Motor neuron (in vitro differentiated cells): ENCODE measurements at regions of chr3 and their contacts with region 1.

Region 1: DNA sequence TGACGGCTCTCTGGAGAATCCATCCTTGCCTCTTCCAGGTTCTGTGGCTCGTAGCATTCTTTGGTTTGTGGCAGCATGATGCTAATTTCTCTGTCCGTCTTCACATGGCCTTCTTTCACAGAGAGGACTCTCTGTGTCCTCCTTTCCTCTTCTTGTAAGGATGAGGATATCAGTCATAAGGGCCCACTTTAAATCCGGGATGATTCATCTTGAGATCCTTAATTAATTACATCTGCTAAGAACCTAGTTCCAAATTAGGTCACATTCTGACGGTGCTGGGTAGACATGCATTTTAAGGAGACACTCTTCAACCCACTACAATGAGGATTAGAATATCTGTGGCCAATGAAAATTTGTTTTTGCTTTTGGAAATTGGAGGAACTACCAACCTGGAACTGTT is 15.7 kb upstream of the GXYLT2 start:
- ATAC-seq: peak in 2 of 8 experiments; percentile 31 to 71
- H3K4me3 ChIP-seq: no peak overlapping the region
- H3K27ac ChIP-seq: no peak overlapping the region
- H3K4me1 ChIP-seq: no peaks in the 10 kb centered on the region

Region 2: DNA sequence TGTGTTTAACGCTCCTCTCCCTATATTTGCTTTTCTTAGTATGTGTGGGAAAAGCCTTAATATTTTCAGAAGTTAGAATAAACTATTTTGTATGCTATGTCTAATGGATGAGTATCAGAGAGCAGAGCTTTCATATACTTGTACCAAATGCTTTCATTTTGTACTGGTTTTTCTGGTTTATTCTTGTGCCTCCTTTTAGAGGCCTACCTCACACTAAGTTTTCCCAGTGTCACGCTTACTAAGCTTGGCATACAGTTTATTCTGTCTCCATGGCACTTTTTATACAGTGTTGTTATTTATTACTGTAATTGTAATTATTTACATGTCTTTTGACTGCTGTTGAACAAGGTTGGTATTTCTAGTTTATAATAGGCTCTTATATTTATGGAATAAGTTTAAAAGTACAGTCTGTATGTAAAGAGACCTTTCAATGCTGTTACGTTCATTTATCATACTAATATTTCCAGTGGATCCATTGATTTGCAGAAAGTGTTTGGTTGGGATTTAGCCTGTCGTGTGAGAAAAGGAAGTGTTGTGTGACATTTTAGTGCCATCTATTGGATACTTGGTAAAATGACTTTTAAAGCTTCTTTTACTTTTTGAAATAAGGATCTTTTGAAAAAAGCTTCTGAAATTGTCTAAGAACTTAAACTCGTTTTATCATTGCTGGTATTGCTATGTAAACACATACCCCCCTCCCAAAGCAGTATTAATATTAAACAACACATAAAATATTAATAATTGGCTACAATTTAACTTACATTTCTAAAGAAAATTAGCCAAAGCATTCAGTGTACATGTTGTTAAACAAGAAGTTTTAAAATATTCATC is 184.0 kb after region 1 on chr3:
- in situ Hi-C with region 1: loop called in 1 of 9 experiments (anchors 25 kb)
- ATAC-seq: peak in 3 of 8 experiments; percentile 12 to 33 (median 20)
- H3K4me3 ChIP-seq: no peak overlapping the region
- H3K27ac ChIP-seq: no peak overlapping the region
- H3K4me1 ChIP-seq: no peaks in the 10 kb centered on the region

Region 3: GRCh38 chr3:73086071-73086494 is 213.9 kb after region 1 on chr3:
- in situ Hi-C with region 1: loop called in 2 of 9 experiments (anchors 25 kb)
- ATAC-seq: peak in 5 of 8 experiments; percentile 41 to 75 (median 60)
- H3K4me3 ChIP-seq: no peak overlapping the region
- H3K27ac ChIP-seq: no peak overlapping the region
- H3K4me1 ChIP-seq: no peaks in the 10 kb centered on the region